HEK293T (cell line): ENCODE measurements at regions of chr22 and their contacts with region 1.

Region 1: GRCh38 chr22:28829358-28830181 is 29.2 kb upstream of the XBP1 start:
- DNase-seq: peak; percentile 88

Region 2: DNA sequence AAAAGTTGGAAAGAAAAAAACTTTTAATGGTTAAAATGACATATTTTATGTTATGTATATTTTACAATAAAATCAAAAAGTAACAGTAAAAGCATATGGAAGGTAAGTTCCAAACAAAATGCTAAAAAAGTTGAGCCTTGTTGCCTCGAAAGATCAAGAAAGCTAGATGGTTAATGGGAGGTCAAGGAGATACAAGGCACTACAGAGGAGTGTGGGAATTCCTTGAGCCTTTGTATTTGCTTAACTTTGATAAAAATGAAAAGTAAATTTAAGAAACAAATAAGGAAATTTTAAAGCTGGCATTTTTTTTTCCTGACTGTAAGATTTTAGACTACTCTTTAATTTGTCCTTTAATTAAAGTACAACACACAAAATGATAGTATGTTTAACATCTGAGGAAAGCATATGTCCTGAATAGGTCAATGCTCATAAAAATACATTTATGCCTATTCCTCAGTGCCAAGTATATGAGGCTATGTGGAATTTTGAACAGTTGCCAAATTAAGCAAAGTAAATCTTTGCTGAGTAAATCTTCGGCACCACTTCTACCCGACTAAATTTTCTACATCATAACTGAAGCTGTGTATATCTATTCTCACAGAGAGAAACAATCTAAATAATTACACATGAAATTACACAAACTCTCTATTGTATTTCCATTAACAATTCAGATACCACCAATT is 258.7 kb before region 1 on chr22:
- CTCF ChIA-PET with region 1: no interaction called
- POLR2A ChIA-PET with region 1: no interaction called
- DNase-seq: no peak

Region 3: GRCh38 chr22:28600546-28601143 is 228.9 kb before region 1 on chr22:
- CTCF ChIA-PET with region 1: interaction called, 14 read pairs
- POLR2A ChIA-PET with region 1: interaction called, 3 read pairs
- DNase-seq: peak; percentile 36

Region 4: DNA sequence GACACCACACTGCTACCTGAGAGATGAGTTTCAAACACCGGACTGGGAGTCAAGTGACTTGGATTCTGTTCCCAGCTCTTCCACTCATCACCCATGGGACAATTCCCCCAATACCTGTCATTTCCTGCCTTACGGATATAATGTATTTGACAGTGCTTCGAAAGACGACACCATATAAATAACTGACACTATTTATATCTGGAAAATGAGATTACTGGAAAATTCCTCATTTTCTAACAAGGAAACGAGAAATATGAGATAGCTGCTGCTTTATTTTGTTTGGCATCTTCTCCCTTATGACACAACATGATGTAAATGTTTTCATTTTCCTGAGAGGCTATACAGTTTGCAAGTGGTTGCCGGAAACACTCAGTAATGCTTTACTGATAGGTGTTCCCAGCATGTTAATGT is 79.1 kb before region 1 on chr22:
- CTCF ChIA-PET with region 1: no interaction called
- POLR2A ChIA-PET with region 1: no interaction called
- DNase-seq: no peak